ENCODE measurements at regions of chr9 and their contacts with region 1.

Region 1: DNA sequence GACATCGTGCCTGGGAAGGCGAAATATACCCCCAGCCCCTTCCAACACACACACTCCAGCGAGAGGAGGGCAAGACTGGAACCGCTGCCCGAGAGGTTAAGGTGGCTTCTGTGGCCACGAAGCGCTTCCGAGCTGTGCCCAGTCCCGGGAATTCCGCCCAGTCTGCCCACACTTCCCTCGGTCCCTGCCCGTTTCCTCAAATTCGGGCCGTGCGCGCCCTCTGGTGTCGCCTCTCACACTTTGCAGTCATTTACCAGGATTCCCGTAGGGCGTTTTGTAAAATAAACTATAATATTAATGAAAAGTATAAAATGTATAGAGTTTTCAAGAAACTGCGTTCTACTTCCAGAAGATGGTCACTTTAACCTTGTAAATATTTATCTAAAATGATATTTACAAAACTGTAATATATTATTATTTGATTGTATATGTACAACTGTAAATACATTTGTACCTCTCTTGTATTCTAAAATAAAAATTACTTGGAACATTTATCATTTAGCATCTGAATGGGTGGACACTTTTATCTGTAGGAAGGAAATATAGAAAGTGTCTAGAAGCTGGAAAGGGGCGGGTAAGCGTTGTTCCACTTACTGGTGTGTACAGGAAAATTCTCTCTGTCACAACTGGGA is 11.0 kb upstream of the EXOSC2 start:
- DNase-seq: peak; percentile 65 to 86
- H3K4me3 ChIP-seq: peak overlapping the region; percentile 36 to 81 (median 56)
- H3K27ac ChIP-seq: no peak overlapping the region
- H3K4me1 ChIP-seq: peaks cover 0 to 4% of the 10 kb centered on the region in 2 donors
- H3K27me3 ChIP-seq: peaks cover 0 to 5% of the 10 kb centered on the region in 2 donors
- CTCF ChIP-seq: peak; percentile 53 to 84 (median 75)
- POLR2A ChIP-seq: no peak

Region 2: GRCh38 chr9:130459941-130460680 is 222.5 kb before region 1 on chr9:
- intact Hi-C with region 1: loop called (anchors 1 kb)
- DNase-seq: no peak
- H3K4me3 ChIP-seq: no peak overlapping the region
- H3K27ac ChIP-seq: no peak overlapping the region
- H3K4me1 ChIP-seq: no peaks in the 10 kb centered on the region
- H3K27me3 ChIP-seq: no peaks in the 10 kb centered on the region
- CTCF ChIP-seq: no peak
- POLR2A ChIP-seq: no peak

Measured in breast epithelium (tissue), 4 donors.